Mammary epithelial cell (primary cell): ENCODE measurements at regions of chr16 and their contacts with region 1.

Region 1: GRCh38 chr16:75206749-75207451 is at the start of gene CTRB2:
- DNase-seq: no peak
- H3K4me3 ChIP-seq: no peak within 1 kb of the TSS
- H3K27ac ChIP-seq: no peak within 1 kb of the TSS
- H3K4me1 ChIP-seq: no peaks in the 10 kb centered on the region
- H3K27me3 ChIP-seq: no peaks in the 10 kb centered on the region
- CTCF ChIP-seq: no peak
- total RNA-seq, gene CTRB2: not detected

Region 2: DNA sequence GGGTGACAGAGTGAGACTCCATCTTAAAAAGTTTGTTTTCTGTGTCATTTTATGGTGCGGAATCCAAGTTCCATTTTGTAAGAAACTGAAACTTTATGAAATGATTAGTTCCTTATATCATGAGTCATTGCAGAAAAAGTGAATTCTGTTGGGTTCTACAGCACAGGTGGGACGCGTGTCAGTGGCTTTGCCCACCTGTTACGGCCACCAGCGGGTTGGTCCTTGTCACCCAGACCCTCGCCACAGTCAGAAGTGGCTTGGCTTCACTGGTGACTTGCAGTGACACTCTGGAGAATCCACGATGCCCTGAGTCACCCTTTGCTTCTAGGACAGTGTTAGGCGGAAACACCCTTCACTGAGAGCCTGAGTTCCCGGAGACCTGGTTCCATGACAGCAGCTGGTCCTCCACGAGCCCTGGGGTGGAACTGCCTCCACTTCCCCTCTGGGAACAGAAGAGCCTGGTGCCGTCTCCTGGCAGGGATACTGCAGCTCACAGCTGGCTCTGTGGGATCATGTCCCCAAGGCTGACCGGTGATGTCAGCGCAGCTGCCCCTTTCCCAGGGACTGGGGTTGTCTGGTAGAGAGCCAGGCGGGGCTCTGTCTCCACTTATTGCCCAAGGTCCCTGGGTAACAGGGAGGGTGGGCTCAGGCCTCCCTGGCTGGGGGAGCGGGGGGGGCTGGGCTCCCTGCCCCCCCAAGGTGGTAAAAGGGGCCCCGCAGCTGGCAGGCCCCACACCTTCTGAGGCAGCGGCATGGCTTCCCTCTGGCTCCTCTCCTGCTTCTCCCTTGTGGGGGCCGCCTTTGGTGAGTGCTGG is 11.6 kb after region 1 on chr16 and contains the start of gene CTRB1:
- CTCF ChIA-PET with region 1: no interaction called
- dilution Hi-C with region 1: no loop called
- in situ Hi-C with region 1: no loop called
- intact Hi-C with region 1: loop called (anchors 2 kb)
- DNase-seq: no peak
- H3K4me3 ChIP-seq: no peak within 1 kb of the TSS
- H3K27ac ChIP-seq: no peak within 1 kb of the TSS
- H3K4me1 ChIP-seq: peaks cover 6% of the 10 kb centered on the region
- H3K27me3 ChIP-seq: no peaks in the 10 kb centered on the region
- CTCF ChIP-seq: no peak
- total RNA-seq, gene CTRB1: not detected

Region 3: GRCh38 chr16:75224306-75225091 is 17.6 kb after region 1 on chr16:
- CTCF ChIA-PET with region 1: no interaction called
- dilution Hi-C with region 1: no loop called
- in situ Hi-C with region 1: no loop called
- intact Hi-C with region 1: loop called (anchors 2 kb)
- DNase-seq: no peak
- H3K4me3 ChIP-seq: no peak overlapping the region
- H3K27ac ChIP-seq: no peak overlapping the region
- H3K4me1 ChIP-seq: no peaks in the 10 kb centered on the region
- H3K27me3 ChIP-seq: no peaks in the 10 kb centered on the region
- CTCF ChIP-seq: no peak